ENCODE measurements at regions of chr2 and their contacts with region 1.

Region 1: GRCh38 chr2:160406591-160407392 is 86.8 kb downstream of the RBMS1 start:
- DNase-seq: peak; percentile 61
- H3K4me3 ChIP-seq: peak overlapping the region; percentile 50 to 93 (median 79)
- H3K27ac ChIP-seq: peak overlapping the region; percentile 83 to 94 (median 92)
- H3K4me1 ChIP-seq: peaks cover 33 to 39% of the 10 kb centered on the region in 2 donors
- H3K27me3 ChIP-seq: no peaks in the 10 kb centered on the region
- CTCF ChIP-seq: peak in 1 of 6 experiments; percentile 8
- POLR2A ChIP-seq: peak in 1 of 2 donors; percentile 44

Region 2: GRCh38 chr2:160332318-160332717 is 74.5 kb before region 1 on chr2:
- intact Hi-C with region 1: loop called (anchors 10 kb)
- DNase-seq: no peak
- H3K4me3 ChIP-seq: no peak overlapping the region
- H3K27ac ChIP-seq: no peak overlapping the region
- H3K4me1 ChIP-seq: peaks cover 29 to 51% of the 10 kb centered on the region in 2 donors
- H3K27me3 ChIP-seq: no peaks in the 10 kb centered on the region
- CTCF ChIP-seq: no peak
- POLR2A ChIP-seq: no peak